ENCODE measurements at regions of chr6 and their contacts with region 1.

Region 1: GRCh38 chr6:2850480-2851150 is 9.0 kb upstream of the SERPINB1 start:
- DNase-seq: no peak
- ATAC-seq: no peak
- H3K4me3 ChIP-seq: no peak overlapping the region
- H3K27ac ChIP-seq: peak overlapping the region; percentile 35; the same call in 1 of the 3 replicates
- H3K4me1 ChIP-seq: peaks cover 19 to 53% of the 10 kb centered on the region in 2 experiments
- H3K27me3 ChIP-seq: no peaks in the 10 kb centered on the region
- CTCF ChIP-seq: no peak
- EP300 ChIP-seq: no peak
- POLR2A ChIP-seq: no peak
- RAD21 ChIP-seq: no peak

Region 2: GRCh38 chr6:2749969-2750600 is 100.5 kb before region 1 on chr6:
- CTCF ChIA-PET with region 1: no interaction called
- POLR2A ChIA-PET with region 1: no interaction called
- in situ Hi-C with region 1: no loop called
- intact Hi-C with region 1: no loop called
- DNase-seq: peak; percentile 69 to 87 (median 72)
- ATAC-seq: peak; percentile 77
- H3K4me3 ChIP-seq: no peak overlapping the region
- H3K27ac ChIP-seq: no peak overlapping the region
- H3K4me1 ChIP-seq: peaks cover 8 to 32% of the 10 kb centered on the region in 2 experiments
- H3K27me3 ChIP-seq: no peaks in the 10 kb centered on the region
- CTCF ChIP-seq: peak; percentile 79 to 93 (median 90)
- EP300 ChIP-seq: no peak
- POLR2A ChIP-seq: no peak
- RAD21 ChIP-seq: peak; percentile 50 to 72

Region 3: GRCh38 chr6:2791124-2791974 is 59.3 kb before region 1 on chr6:
- CTCF ChIA-PET with region 1: interaction called, 8 read pairs
- POLR2A ChIA-PET with region 1: no interaction called
- in situ Hi-C with region 1: no loop called
- intact Hi-C with region 1: loop called (anchors 1 kb)
- DNase-seq: peak; percentile 74 to 88 (median 81)
- ATAC-seq: peak; percentile 97
- H3K4me3 ChIP-seq: no peak overlapping the region
- H3K27ac ChIP-seq: no peak overlapping the region
- H3K4me1 ChIP-seq: peaks cover 2 to 3% of the 10 kb centered on the region in 2 experiments; a peak in 3 of 5 replicates
- H3K27me3 ChIP-seq: no peaks in the 10 kb centered on the region
- CTCF ChIP-seq: peak; percentile 89 to 98 (median 97)
- EP300 ChIP-seq: no peak
- POLR2A ChIP-seq: no peak
- RAD21 ChIP-seq: peak; percentile 97 to 99

Region 4: GRCh38 chr6:2911171-2911570 is 60.6 kb after region 1 on chr6:
- CTCF ChIA-PET with region 1: interaction called, 11 read pairs
- POLR2A ChIA-PET with region 1: interaction called, 5 read pairs
- in situ Hi-C with region 1: no loop called
- intact Hi-C with region 1: loop called (anchors 1 kb)
- DNase-seq: no peak
- ATAC-seq: no peak
- H3K4me3 ChIP-seq: no peak overlapping the region
- H3K27ac ChIP-seq: no peak overlapping the region
- H3K4me1 ChIP-seq: peaks cover 5 to 6% of the 10 kb centered on the region in 2 experiments; a peak in 4 of 5 replicates
- H3K27me3 ChIP-seq: no peaks in the 10 kb centered on the region
- CTCF ChIP-seq: no peak
- EP300 ChIP-seq: no peak
- POLR2A ChIP-seq: no peak
- RAD21 ChIP-seq: no peak

Region 5: GRCh38 chr6:2918936-2919335 is 68.3 kb after region 1 on chr6:
- CTCF ChIA-PET with region 1: interaction called, 3 read pairs
- POLR2A ChIA-PET with region 1: interaction called, 3 read pairs
- in situ Hi-C with region 1: no loop called
- intact Hi-C with region 1: loop called (anchors 2 kb)
- DNase-seq: no peak
- ATAC-seq: no peak
- H3K4me3 ChIP-seq: no peak overlapping the region
- H3K27ac ChIP-seq: no peak overlapping the region
- H3K4me1 ChIP-seq: peaks cover 13 to 14% of the 10 kb centered on the region in 2 experiments; a peak in 3 of 5 replicates
- H3K27me3 ChIP-seq: no peaks in the 10 kb centered on the region
- CTCF ChIP-seq: no peak
- EP300 ChIP-seq: no peak
- POLR2A ChIP-seq: no peak
- RAD21 ChIP-seq: no peak

Region 6: DNA sequence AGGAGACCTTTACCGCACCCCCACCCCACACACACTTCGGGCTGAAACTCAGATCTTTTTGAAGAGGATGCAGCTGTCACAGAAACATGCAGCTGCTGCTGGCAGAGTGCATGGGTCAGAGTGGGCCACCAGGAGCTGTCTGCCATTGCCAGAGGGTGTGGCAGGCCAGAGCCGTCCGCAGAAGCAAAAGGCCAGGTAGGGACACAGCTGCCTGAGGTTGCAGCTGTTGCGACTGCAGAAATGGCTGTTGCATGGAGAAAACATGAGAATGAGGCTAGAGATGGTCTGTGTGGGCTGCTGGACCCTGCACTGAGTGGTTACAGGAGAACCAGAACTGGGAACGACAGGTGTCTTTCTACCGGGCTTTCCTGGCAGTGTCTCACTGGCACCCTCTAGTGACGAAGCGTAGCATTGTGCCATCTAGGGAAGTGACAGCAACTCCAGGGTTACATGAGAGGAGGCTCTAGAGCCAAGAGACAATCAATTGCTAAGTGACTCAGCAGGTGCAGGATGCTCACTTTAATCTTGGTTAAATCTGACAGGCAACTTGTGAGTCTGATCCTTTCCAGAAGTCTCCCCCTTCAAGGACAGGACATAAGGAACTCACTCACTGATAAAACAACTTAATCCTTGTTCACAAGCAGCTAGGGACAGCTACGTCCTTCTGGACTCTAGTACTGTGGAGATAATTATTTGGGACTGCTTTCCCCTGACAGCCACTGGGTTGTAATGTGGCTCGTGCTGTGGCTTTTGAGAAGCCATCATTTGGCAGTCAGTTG is 81.5 kb after region 1 on chr6:
- CTCF ChIA-PET with region 1: interaction called, 39 read pairs
- POLR2A ChIA-PET with region 1: interaction called, 6 read pairs
- in situ Hi-C with region 1: loop called (anchors 5 kb)
- intact Hi-C with region 1: loop called (anchors 1 kb)
- DNase-seq: peak; percentile 94 to 97 (median 94)
- ATAC-seq: peak; percentile 99
- H3K4me3 ChIP-seq: no peak overlapping the region
- H3K27ac ChIP-seq: 0 out of 3 replicates have a peak overlapping the region, but pooled peaks have one; percentile 2
- H3K4me1 ChIP-seq: peaks cover 9 to 13% of the 10 kb centered on the region in 2 experiments; a peak in 4 of 5 replicates
- H3K27me3 ChIP-seq: no peaks in the 10 kb centered on the region
- CTCF ChIP-seq: peak; percentile 98 to 100 (median 99)
- EP300 ChIP-seq: peak; percentile 97
- POLR2A ChIP-seq: no peak
- RAD21 ChIP-seq: peak; percentile 98

Region 7: DNA sequence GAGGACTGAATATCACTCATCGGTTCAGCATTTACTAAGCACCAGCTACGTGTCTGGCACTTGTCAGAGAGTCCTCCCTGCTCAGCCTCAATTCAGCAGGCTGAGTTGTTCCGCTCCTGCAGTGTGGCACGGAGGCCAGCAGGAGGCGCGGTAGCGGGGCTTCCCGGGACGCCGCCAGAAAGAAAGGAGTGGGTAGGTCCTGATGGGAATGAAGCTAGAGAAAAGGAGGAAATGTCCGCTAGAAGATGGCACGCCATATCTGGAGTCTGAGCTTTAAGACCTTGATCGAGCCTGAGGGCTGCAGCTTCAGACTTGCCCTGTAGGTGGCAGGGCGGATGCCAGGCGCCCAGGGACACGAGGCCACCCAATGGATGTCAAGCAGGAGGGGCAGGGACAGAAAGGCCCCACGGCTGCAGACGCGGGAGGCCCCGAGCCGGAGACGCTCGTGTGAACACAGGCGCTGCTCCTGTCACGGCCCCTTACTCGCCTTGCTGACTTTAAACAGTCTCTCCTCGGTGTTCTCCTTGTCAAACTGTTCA is 102.0 kb after region 1 on chr6:
- CTCF ChIA-PET with region 1: interaction called, 15 read pairs
- POLR2A ChIA-PET with region 1: interaction called, 3 read pairs
- in situ Hi-C with region 1: no loop called
- intact Hi-C with region 1: no loop called
- DNase-seq: peak; percentile 74 to 80 (median 78)
- ATAC-seq: peak; percentile 89
- H3K4me3 ChIP-seq: no peak overlapping the region
- H3K27ac ChIP-seq: peak overlapping the region; percentile 17; the same call in 1 of the 3 replicates
- H3K4me1 ChIP-seq: peaks cover 25 to 26% of the 10 kb centered on the region in 2 experiments
- H3K27me3 ChIP-seq: no peaks in the 10 kb centered on the region
- CTCF ChIP-seq: peak; percentile 98 to 100 (median 99)
- EP300 ChIP-seq: no peak
- POLR2A ChIP-seq: no peak
- RAD21 ChIP-seq: peak; percentile 90 to 96

Measured in K562 (cell line).